ENCODE measurements at regions of chr5 and their contacts with region 1.

Region 1: GRCh38 chr5:143023411-143024096 is 253.4 kb downstream of the ARHGAP26 start:
- DNase-seq: peak; percentile 80
- ATAC-seq: peak; percentile 94

Region 2: GRCh38 chr5:143041972-143042770 is 18.6 kb after region 1 on chr5:
- intact Hi-C with region 1: loop called (anchors 2 kb)
- DNase-seq: no peak
- ATAC-seq: peak; percentile 63

Region 3: GRCh38 chr5:143052967-143053682 is 29.6 kb after region 1 on chr5:
- intact Hi-C with region 1: no loop called
- DNase-seq: no peak
- ATAC-seq: no peak

Region 4: GRCh38 chr5:143063175-143063970 is 39.8 kb after region 1 on chr5:
- intact Hi-C with region 1: loop called (anchors 5 kb)
- DNase-seq: peak; percentile 91
- ATAC-seq: peak; percentile 86

Region 5: DNA sequence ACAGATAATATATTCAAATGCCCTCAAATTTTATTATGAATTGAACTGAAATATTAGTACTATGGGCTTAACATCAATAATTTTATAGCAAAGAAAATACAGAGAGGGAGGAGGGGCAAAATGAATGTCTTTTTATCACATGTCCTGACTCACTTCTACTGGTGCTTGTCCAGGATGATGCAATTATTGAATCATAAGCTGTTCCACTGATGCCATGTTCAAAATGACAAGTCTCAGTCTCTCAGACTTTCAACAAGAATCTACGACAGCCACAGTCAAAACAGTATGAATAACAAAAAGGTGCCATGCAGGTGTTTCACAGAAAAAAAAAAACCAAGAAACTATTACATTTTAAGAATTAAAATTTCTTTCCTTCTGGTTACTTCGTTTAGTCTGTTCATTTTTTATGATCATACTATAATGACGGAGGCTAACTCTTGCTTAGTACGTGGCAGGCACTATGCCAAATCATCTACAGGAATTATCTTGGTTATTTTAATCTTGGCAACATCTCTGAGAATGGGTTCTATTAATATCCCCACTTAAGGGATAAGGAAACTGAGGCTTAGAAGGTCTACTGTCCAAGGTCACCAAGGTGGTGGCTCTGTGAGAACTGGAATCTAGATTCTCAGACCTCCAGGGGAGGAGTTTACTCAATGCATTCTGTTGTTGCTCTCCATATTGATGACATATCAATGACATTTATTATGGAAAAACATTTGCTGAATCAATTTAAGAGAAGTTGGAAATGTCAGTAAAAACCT is 318.4 kb after region 1 on chr5:
- intact Hi-C with region 1: no loop called
- DNase-seq: no peak
- ATAC-seq: peak; percentile 29

Measured in Right ventricle myocardium inferior (tissue), 1 donor.